Activated CD8-positive, alpha-beta T cell treated with anti-CD3 and anti-CD28 coated beads for 36 hours (primary cell): ENCODE measurements at regions of chr11 and their contacts with region 1.

Region 1: DNA sequence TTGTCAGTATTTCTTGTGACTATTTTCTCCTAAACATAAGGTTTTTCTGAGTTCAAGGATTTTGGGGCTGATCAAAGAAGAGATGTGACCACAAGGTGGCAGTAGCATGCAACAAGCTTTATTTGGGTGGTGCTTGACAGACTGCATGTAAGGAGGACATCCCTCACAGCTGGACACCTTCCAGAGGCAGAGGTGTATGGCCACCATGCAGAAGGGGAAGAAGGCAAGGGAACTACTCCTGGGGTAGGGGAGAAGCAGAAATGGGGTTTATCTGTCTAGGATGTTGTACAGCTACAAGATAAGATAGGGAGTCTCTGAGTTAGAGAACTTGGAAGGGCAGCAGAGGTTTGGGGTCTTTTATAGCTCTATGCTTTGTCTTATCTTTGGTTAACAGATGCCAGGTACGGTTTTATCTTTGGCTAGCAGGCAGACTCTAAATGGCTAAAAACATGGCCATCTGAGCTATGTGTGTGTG is 5.1 kb upstream of the BIRC2 start:
- DNase-seq: peak; percentile 87
- ATAC-seq: peak; percentile 63
- H3K4me3 Mint-ChIP-seq: no peak overlapping the region
- H3K27ac Mint-ChIP-seq: no peak overlapping the region
- H3K4me1 Mint-ChIP-seq: peaks cover 23% of the 10 kb centered on the region
- H3K27me3 Mint-ChIP-seq: no peaks in the 10 kb centered on the region
- CTCF ChIP-seq: peak; percentile 78

Region 2: DNA sequence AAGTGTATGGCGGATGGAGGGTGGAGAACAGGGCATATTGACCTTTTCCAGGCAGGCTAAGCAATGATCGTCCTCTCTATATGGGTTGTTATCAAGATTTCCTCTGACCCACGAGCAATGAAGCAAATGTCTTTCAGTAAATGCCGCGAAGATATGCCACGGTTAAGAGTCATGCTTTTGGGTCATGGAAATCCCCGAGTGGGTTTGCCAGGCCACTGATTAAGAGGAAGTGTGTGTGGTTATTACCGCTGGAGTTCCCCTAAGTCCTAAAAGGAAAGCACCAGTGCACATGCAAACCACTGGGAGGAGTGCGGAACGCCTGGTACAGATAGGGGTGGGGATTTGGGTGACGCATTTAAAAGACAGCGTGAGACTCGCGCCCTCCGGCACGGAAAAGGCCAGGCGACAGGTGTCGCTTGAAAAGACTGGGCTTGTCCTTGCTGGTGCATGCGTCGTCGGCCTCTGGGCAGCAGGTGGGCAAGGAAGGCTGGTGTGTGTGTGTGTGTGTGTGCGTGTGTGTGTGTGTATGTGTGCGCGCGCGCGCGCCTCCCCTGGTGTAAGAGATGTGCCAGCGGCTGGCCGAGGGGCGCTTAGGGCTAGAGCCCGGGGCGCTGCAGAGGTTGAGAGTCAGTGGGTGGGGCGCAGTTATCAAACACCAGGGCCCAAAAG is 24.6 kb before region 1 on chr11 and contains the start of gene BIRC3:
- CTCF ChIA-PET with region 1: interaction called, 14 read pairs
- POLR2A ChIA-PET with region 1: interaction called, 6 read pairs
- intact Hi-C with region 1: no loop called
- DNase-seq: peak; percentile 98
- ATAC-seq: peak; percentile 87
- H3K4me3 Mint-ChIP-seq: peak within 1 kb of the TSS; percentile 100
- H3K27ac Mint-ChIP-seq: peak within 1 kb of the TSS; percentile 99
- H3K4me1 Mint-ChIP-seq: peaks cover 62% of the 10 kb centered on the region
- H3K27me3 Mint-ChIP-seq: no peaks in the 10 kb centered on the region
- CTCF ChIP-seq: no peak
- total RNA-seq, gene BIRC3: 102 to 108 TPM

Region 3: DNA sequence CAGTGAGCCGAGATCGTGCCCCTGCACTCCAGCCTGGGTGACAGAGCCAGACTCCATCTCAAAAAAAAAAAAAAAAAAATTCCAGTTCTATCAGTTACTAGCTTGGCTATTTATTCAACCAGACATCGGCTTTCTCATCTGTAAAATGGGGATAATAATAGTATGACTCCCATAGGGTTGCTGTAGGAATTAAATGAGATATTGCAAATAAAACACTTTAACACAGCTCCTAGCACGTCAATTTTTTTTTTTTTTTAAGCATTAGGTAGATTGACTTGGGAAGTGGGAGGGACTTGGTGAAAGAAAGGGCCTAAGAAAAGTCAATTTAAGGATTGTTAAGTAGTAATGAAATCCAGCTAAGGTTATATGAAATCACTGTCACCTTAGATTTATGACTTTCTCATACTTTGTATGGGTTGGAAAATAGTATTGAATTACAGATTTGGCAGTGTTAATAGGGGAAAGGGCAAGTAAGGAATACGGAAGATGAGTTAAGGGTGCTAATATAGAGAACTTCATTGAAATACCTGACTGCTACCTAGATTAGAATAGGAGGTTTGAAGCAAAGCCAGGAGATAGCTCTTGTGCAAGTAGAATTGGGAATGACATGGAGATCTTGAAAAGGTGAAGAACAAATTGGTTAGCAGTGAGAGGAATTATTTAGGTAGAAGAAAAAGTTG is 34.0 kb after region 1 on chr11:
- CTCF ChIA-PET with region 1: interaction called, 15 read pairs
- POLR2A ChIA-PET with region 1: no interaction called
- intact Hi-C with region 1: no loop called
- DNase-seq: no peak
- ATAC-seq: no peak
- H3K4me3 Mint-ChIP-seq: no peak overlapping the region
- H3K27ac Mint-ChIP-seq: no peak overlapping the region
- H3K4me1 Mint-ChIP-seq: peaks cover 30% of the 10 kb centered on the region
- H3K27me3 Mint-ChIP-seq: no peaks in the 10 kb centered on the region
- CTCF ChIP-seq: no peak

Region 4: GRCh38 chr11:102451681-102452460 is 110.0 kb after region 1 on chr11:
- CTCF ChIA-PET with region 1: interaction called, 11 read pairs
- POLR2A ChIA-PET with region 1: interaction called, 3 read pairs
- intact Hi-C with region 1: loop called (anchors 5 kb)
- DNase-seq: peak; percentile 88
- ATAC-seq: peak; percentile 64
- H3K4me3 Mint-ChIP-seq: peak overlapping the region; percentile 98
- H3K27ac Mint-ChIP-seq: peak overlapping the region; percentile 96
- H3K4me1 Mint-ChIP-seq: peaks cover 75% of the 10 kb centered on the region
- H3K27me3 Mint-ChIP-seq: no peaks in the 10 kb centered on the region
- CTCF ChIP-seq: peak; percentile 27

Region 5: GRCh38 chr11:102599642-102600261 is 257.9 kb after region 1 on chr11:
- CTCF ChIA-PET with region 1: interaction called, 10 read pairs
- POLR2A ChIA-PET with region 1: interaction called, 3 read pairs
- intact Hi-C with region 1: no loop called
- DNase-seq: peak; percentile 38
- ATAC-seq: peak; percentile 97
- H3K4me3 Mint-ChIP-seq: no peak overlapping the region
- H3K27ac Mint-ChIP-seq: peak overlapping the region; percentile 48
- H3K4me1 Mint-ChIP-seq: peaks cover 26% of the 10 kb centered on the region
- H3K27me3 Mint-ChIP-seq: no peaks in the 10 kb centered on the region
- CTCF ChIP-seq: no peak

Region 6: GRCh38 chr11:102666331-102666957 is 324.6 kb after region 1 on chr11:
- CTCF ChIA-PET with region 1: interaction called, 51 read pairs
- POLR2A ChIA-PET with region 1: no interaction called
- intact Hi-C with region 1: loop called (anchors 5 kb)
- DNase-seq: peak; percentile 23
- ATAC-seq: no peak
- H3K4me3 Mint-ChIP-seq: no peak overlapping the region
- H3K27ac Mint-ChIP-seq: no peak overlapping the region
- H3K4me1 Mint-ChIP-seq: no peaks in the 10 kb centered on the region
- H3K27me3 Mint-ChIP-seq: peaks cover 2% of the 10 kb centered on the region
- CTCF ChIP-seq: peak; percentile 78